ENCODE measurements at regions of chr6 and their contacts with region 1.

Region 1: GRCh38 chr6:108541838-108542759 is 18.6 kb upstream of the FOXO3 start:
- DNase-seq: peak; percentile 75
- H3K4me3 ChIP-seq: no peak overlapping the region
- H3K27ac ChIP-seq: no peak overlapping the region
- H3K4me1 ChIP-seq: no peaks in the 10 kb centered on the region
- H3K27me3 ChIP-seq: no peaks in the 10 kb centered on the region
- CTCF ChIP-seq: peak; percentile 75

Region 2: GRCh38 chr6:108782179-108783041 is 240.3 kb after region 1 on chr6:
- intact Hi-C with region 1: loop called (anchors 5 kb)
- DNase-seq: peak; percentile 90
- H3K4me3 ChIP-seq: peak overlapping the region; percentile 17
- H3K27ac ChIP-seq: no peak overlapping the region
- H3K4me1 ChIP-seq: no peaks in the 10 kb centered on the region
- H3K27me3 ChIP-seq: no peaks in the 10 kb centered on the region
- CTCF ChIP-seq: peak; percentile 77

Region 3: GRCh38 chr6:108835218-108835850 is 293.2 kb after region 1 on chr6:
- intact Hi-C with region 1: loop called (anchors 2 kb)
- DNase-seq: peak; percentile 88
- H3K4me3 ChIP-seq: no peak overlapping the region
- H3K27ac ChIP-seq: no peak overlapping the region
- H3K4me1 ChIP-seq: no peaks in the 10 kb centered on the region
- H3K27me3 ChIP-seq: no peaks in the 10 kb centered on the region
- CTCF ChIP-seq: peak; percentile 99

Region 4: GRCh38 chr6:108896111-108896661 is 354.1 kb after region 1 on chr6:
- intact Hi-C with region 1: loop called (anchors 2 kb)
- DNase-seq: no peak
- H3K4me3 ChIP-seq: no peak overlapping the region
- H3K27ac ChIP-seq: no peak overlapping the region
- H3K4me1 ChIP-seq: peaks cover 2% of the 10 kb centered on the region
- H3K27me3 ChIP-seq: no peaks in the 10 kb centered on the region
- CTCF ChIP-seq: no peak

Region 5: GRCh38 chr6:109073344-109074132 is 531.4 kb after region 1 on chr6:
- intact Hi-C with region 1: loop called (anchors 5 kb)
- DNase-seq: peak; percentile 58
- H3K4me3 ChIP-seq: no peak overlapping the region
- H3K27ac ChIP-seq: no peak overlapping the region
- H3K4me1 ChIP-seq: no peaks in the 10 kb centered on the region
- H3K27me3 ChIP-seq: no peaks in the 10 kb centered on the region
- CTCF ChIP-seq: peak; percentile 54

Region 6: GRCh38 chr6:109252261-109253041 is 710.4 kb after region 1 on chr6:
- intact Hi-C with region 1: no loop called
- DNase-seq: no peak
- H3K4me3 ChIP-seq: no peak overlapping the region
- H3K27ac ChIP-seq: no peak overlapping the region
- H3K4me1 ChIP-seq: peaks cover 5% of the 10 kb centered on the region
- H3K27me3 ChIP-seq: no peaks in the 10 kb centered on the region
- CTCF ChIP-seq: no peak

Region 7: GRCh38 chr6:109397020-109397419 is 854.9 kb after region 1 on chr6:
- intact Hi-C with region 1: loop called (anchors 10 kb)
- DNase-seq: no peak
- H3K4me3 ChIP-seq: no peak overlapping the region
- H3K27ac ChIP-seq: no peak overlapping the region
- H3K4me1 ChIP-seq: no peaks in the 10 kb centered on the region
- H3K27me3 ChIP-seq: no peaks in the 10 kb centered on the region
- CTCF ChIP-seq: no peak